Tibial artery (tissue), 4 donors: ENCODE measurements at regions of chr11 and their contacts with region 1.

Region 1: DNA sequence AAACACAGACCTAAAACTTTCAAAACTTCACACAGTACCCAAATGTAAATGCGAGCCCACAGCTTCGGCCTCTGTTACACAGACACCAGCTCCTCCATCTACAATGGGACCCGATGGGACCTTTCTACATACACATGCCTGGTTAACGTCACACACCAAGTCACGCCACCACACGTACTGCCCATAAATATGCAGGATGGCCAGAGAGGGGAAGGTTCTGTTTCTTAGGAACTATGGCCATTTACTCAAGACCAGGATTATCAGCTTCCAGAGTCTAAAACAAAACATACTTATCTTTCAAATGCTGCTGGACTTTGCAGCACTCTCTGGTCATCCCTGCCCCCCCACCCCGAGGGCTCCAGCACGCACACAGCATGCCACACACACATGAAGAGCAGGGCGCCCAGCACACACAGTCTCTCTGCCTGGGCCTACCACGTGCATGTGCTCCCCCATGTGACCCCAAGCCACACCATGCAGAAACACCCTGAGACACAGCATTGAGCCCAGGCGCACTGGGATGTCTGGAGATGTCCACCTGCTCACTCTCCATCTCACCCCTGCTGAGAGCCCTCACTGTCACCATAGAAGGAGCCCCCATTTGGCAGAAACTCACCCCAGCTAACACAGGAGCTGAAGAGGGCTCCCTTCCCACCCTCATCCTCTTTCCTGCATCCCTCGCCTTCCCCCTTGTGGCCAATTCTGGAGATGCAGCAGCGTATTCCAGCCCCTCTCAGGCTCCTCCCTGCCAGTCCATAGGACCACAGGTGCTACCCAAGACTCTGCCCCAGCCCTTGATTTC is 61.8 kb downstream of the SLC22A12 start:
- DNase-seq: peak; percentile 79 to 85
- H3K4me3 ChIP-seq: no peak overlapping the region
- H3K27ac ChIP-seq: no peak overlapping the region
- H3K4me1 ChIP-seq: peaks cover 0 to 9% (median 0%) of the 10 kb centered on the region in 4 donors
- H3K27me3 ChIP-seq: peaks cover 0 to 12% of the 10 kb centered on the region in 2 donors
- CTCF ChIP-seq: peak; percentile 88 to 93

Region 2: DNA sequence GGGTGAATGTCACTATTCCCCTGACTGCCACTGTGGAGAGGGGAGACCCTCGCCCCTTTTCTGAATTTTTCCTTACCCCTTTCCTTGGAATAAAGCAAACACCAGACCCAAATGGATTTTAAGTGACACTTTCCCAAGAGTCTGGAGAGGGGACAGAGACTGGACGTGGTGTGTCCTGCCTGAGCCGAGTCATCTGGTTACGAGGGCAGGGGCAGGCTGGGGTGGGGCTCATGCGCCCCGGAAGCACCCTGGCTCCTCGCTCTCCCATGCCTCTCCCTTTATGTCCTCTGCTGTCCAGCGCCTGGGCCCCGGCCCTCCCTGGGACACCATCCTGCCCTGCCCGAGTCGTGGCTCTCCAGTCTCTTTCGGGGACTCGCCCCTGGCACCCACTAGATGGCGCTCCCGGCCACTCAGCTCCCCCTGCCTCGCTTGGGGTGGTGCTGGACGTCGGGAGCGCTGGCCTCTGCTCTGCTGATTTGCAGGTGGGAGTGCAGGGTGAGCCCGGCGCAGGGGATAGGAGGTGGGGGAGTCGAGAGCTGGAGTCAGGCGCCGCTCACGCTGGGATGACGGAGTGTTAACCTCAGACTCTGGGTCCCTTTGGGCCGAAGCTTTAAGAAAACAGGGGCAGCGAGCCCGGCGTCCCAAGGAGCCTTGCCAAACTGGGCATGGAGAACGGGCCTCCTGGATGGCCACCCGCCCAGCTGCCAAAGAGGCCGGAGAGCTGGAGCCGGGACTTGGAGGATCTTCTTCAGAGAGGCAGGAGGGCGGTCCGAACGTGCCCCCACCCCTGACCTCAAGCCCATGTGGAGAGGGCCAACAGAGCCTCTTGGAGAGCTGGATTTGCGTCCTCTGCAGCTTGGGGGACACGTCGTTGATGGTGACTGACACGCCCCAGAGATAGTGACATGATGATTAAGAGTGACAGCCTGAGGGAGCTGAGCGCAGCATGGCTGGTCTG is 203.9 kb before region 1 on chr11:
- intact Hi-C with region 1: loop called (anchors 5 kb)
- DNase-seq: peak; percentile 81 to 94
- H3K4me3 ChIP-seq: peak overlapping the region; percentile 35 to 51
- H3K27ac ChIP-seq: peak overlapping the region; percentile 76 to 83
- H3K4me1 ChIP-seq: peaks cover 0 to 29% (median 22%) of the 10 kb centered on the region in 4 donors
- H3K27me3 ChIP-seq: no peaks in the 10 kb centered on the region
- CTCF ChIP-seq: peak; percentile 80 to 91

Region 3: DNA sequence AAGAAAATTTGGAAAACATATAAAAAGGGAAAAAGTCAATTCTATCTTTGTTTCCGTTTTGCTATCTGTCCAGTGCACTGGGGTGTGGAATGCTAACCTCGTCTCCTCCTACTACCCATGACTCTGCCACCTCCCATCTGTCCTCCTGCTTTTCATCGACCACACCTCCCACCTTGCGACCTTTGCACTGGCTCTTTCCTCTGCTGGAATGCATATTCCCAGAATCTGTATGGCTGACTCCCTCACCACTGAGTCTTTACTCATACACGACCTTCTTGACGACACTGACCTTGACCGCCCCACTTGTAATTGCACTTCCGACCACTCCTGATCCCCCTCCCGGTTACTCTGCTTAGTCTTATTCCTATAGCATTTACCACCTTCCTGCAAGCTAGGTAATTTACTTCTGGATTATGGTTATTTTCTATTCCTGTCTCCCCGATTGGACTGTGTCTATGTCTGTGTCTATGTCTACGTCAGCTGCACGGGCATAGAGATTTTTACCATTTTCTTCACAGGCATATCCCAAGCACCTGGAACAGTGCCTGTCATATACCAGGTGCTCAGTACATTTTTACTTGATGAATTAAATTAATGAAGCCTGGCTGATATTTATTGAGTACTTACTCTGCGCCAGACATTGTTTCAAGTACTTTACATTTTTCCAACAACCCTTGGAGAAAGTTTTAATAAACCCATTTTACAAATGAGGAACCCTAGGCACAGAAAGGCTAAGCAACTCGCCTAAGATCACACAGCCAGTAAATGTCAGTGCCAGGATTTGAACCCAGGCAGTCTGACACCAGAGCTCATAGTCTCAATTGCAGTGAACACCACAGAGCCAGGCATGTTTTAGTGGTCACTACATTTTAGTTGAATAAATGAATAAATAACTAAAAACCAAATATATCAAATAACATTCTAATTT is 151.0 kb before region 1 on chr11:
- intact Hi-C with region 1: no loop called
- DNase-seq: no peak
- H3K4me3 ChIP-seq: no peak overlapping the region
- H3K27ac ChIP-seq: no peak overlapping the region
- H3K4me1 ChIP-seq: no peaks in the 10 kb centered on the region
- H3K27me3 ChIP-seq: peaks cover 0 to 44% of the 10 kb centered on the region in 2 donors
- CTCF ChIP-seq: no peak

Region 4: DNA sequence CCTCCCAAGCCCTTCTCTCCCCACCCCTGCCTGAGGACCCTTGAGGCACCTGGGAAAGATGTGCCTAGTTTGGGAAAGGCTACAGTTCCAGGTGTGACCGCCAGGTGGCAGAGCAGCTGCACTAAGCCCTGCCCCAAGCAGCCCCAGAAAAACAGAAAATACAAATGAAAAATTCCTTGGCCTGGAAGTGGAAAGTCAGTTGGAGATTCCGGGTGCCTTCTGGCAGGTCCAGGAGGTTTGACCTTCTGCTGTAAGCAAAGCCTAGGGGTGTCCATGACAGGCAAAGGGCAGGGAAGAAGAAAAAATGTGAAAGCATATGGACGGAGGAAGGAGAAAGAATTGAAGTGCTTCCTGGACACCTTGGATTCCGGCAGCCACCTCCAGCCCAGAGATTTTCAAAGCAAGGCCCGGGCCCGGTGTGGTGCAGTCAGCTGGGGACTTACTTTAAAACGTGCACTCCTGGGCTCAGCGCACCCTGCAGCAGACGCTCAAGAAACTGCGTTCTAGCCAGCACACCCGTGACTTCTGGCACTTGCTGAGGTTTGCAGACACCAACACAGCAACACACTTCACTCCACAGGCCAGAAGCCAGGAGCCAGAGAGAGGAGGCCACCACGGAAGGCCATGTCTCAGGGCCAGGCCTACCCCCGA is 99.1 kb before region 1 on chr11:
- intact Hi-C with region 1: loop called (anchors 2 kb)
- DNase-seq: peak; percentile 57 to 80
- H3K4me3 ChIP-seq: no peak overlapping the region
- H3K27ac ChIP-seq: peak overlapping the region in 1 of 2 donors; percentile 56
- H3K4me1 ChIP-seq: peaks cover 0 to 22% (median 9%) of the 10 kb centered on the region in 4 donors
- H3K27me3 ChIP-seq: peaks cover 0 to 3% of the 10 kb centered on the region in 2 donors
- CTCF ChIP-seq: peak; percentile 95 to 98